ENCODE measurements at regions of chr22 and their contacts with region 1.

Region 1: DNA sequence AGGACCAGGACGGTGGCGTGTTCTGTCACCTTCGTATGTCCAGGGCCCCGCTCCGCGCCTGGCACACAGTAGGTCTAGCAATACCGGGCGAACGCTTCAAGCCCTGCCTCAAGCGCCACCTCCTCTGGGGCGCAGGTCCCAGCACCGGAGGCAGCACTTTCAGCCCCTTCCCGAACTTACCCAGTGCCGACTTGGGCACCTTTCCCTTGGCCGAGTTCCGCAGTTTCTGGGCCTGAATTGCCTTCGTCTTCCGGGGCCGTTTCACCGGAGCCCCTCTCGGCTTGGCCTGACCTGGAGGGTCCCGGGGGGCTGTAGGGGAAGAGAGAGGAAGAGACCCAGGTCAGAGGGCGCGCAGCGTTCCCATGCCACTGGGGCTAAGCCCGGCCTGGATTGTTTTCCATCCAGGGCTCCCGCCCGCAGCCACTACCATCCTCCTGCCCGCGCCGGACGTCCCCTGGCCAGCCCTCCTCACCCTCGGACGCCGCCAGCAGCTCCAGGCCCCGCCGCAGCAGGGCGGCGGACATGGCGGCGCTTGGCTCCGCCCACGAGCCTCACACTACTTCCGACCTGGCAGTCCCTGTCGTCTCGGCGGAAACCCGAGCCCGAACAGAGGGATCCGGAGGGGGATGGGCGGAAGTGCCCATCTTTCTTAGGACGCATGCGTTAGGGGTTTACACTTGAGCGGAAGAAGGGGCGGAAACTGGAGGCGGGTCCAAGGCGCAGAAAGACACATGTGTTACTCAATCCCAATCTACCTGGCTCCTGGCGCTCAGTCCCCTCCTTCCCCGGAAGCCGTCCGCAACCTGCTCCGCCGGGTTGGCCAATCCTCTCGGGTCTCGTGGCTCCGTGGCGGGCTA is at the start of gene RPS19BP1:
- DNase-seq: peak; percentile 100
- H3K4me3 ChIP-seq: peak within 1 kb of the TSS; percentile 81
- H3K27ac ChIP-seq: peak within 1 kb of the TSS; percentile 86
- H3K4me1 ChIP-seq: peaks cover 35% of the 10 kb centered on the region
- H3K27me3 ChIP-seq: no peaks in the 10 kb centered on the region
- CTCF ChIP-seq: no peak
- total RNA-seq, gene RPS19BP1: 61.4 to 111 TPM

Region 2: GRCh38 chr22:39343259-39344048 is 189.0 kb before region 1 on chr22:
- intact Hi-C with region 1: no loop called
- DNase-seq: peak; percentile 61
- H3K4me3 ChIP-seq: no peak overlapping the region
- H3K27ac ChIP-seq: no peak overlapping the region
- H3K4me1 ChIP-seq: no peaks in the 10 kb centered on the region
- H3K27me3 ChIP-seq: no peaks in the 10 kb centered on the region
- CTCF ChIP-seq: peak; percentile 57

Region 3: GRCh38 chr22:39490135-39490798 is 42.2 kb before region 1 on chr22:
- intact Hi-C with region 1: loop called (anchors 5 kb)
- DNase-seq: peak; percentile 79
- H3K4me3 ChIP-seq: no peak overlapping the region
- H3K27ac ChIP-seq: no peak overlapping the region
- H3K4me1 ChIP-seq: peaks cover 7% of the 10 kb centered on the region
- H3K27me3 ChIP-seq: no peaks in the 10 kb centered on the region
- CTCF ChIP-seq: no peak

Region 4: DNA sequence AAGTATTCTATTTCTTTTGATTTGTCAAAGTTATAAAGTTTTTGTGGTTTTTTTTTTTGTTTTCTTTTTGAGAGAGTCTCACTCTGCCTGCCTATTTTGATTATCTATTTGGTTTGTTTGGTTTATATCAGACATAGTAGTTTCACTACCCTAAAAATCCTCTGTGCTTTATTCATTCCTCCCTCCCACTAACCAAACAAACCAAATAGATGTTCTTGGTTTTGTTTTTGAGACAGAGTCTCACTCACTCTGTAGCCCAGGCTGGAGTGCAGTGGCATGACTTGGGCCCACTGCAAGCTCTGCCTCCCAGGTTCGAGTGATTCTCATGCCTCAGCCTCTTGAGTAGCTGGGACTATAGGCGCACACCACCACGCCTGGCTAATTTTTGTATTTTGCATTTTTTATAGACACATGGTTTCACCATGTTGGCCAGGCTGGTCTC is 293.2 kb after region 1 on chr22:
- intact Hi-C with region 1: no loop called
- DNase-seq: no peak
- H3K4me3 ChIP-seq: no peak overlapping the region
- H3K27ac ChIP-seq: no peak overlapping the region
- H3K4me1 ChIP-seq: no peaks in the 10 kb centered on the region
- H3K27me3 ChIP-seq: peaks cover 9% of the 10 kb centered on the region
- CTCF ChIP-seq: no peak

Region 5: DNA sequence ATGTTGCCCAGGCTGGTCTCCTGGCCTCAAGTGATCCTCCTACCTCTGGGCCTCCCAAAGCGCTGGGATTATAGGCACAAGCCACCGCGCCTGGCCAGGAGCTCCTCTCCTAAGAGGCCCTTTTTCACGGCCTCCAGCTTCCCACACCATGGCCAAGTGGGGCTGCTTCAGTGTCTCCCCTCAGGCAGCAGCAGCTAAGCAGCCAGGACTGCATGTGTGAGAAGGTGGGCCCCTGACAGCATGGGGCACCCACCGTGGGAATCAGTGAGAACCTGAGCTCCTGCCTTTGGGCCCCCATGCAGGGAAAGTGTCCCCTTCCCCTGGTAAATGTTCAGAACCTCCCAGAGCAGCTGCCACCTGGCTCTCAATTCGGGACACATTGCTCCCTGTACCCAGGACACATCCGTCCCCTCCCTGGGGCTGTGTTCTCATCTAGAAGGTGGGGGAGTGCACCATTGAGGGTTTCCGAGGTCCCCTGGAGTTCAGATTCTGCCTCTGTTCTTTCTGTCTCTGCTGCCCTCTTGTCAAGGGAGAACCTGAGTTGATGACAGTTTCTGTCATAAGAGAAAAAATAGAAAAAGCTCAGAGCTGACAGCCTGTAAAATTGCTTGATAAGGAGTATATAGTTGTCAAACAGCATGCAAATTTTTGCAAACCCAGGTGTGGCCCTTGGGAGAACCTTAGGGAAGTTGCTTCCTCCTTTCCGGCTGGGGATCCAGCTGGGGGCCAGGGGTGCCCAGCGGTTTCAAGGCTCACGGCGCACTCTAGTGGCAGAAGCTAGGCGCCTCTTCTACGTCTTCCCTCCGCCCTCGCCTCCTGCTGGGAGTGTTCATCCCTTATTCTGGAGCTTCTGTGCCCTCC is 492.0 kb after region 1 on chr22:
- intact Hi-C with region 1: loop called (anchors 2 kb)
- DNase-seq: peak; percentile 85
- H3K4me3 ChIP-seq: no peak overlapping the region
- H3K27ac ChIP-seq: no peak overlapping the region
- H3K4me1 ChIP-seq: peaks cover 6% of the 10 kb centered on the region
- H3K27me3 ChIP-seq: no peaks in the 10 kb centered on the region
- CTCF ChIP-seq: peak; percentile 80

Region 6: DNA sequence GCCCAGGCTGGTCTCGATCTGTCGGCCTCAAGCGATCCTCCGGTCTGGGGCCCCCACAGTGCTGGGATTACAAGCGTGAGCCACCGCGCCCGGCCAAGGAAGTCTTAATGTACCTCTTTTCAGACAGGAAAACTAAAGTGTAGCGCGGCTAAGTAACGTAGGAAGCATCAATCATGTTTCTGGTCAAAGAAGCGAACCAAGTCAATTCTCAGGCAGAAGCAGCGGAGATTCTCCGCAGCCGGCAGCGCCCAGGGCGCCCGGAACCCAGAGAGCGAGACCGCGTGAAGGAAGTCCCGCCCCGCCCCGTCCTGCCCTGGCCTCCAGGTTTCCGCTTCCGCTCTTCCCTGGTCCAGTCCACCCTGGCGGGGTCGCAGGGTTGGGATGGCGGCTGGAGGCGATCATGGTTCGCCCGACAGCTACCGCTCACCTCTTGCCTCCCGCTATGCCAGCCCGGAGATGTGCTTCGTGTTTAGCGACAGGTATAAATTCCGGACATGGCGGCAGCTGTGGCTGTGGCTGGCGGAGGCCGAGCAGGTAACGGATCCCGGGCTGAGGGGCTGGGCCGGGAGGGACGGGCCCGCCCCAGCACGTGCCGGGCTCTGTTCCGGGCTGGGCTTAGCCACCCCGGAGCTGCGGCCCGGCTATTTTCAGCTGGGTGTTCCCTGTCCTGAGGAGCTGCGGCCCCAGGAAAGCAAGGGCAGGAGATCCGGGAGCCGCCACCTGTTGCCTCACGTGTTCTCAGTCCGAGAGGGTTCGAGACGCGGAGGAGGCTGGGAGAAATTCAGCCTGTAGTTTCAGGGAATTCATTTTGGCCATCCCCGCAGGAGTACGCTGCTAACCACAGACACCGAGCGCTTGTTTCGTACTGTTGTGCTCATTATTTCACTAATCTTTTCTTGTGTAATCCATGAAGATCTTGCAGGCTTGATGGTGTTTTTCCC is 814.0 kb after region 1 on chr22 and contains the start of gene ADSL:
- intact Hi-C with region 1: loop called (anchors 10 kb)
- DNase-seq: peak; percentile 93
- H3K4me3 ChIP-seq: peak within 1 kb of the TSS; percentile 60
- H3K27ac ChIP-seq: peak within 1 kb of the TSS; percentile 67
- H3K4me1 ChIP-seq: peaks cover 10% of the 10 kb centered on the region
- H3K27me3 ChIP-seq: no peaks in the 10 kb centered on the region
- CTCF ChIP-seq: no peak
- total RNA-seq, gene ADSL: 26.4 to 47.0 TPM

Measured in colonic mucosa (tissue), 4 donors.